ENCODE measurements at regions of chr1 and their contacts with region 1.

Region 1: GRCh38 chr1:32773018-32773763 is 44.0 kb downstream of the YARS1 start:
- DNase-seq: peak; percentile 63 to 97 (median 81)

Region 2: GRCh38 chr1:32400876-32401631 is 372.1 kb before region 1 on chr1:
- intact Hi-C with region 1: loop called (anchors 5 kb)
- DNase-seq: peak; percentile 73 to 98 (median 86)

Region 3: GRCh38 chr1:32521165-32521564 is 252.0 kb before region 1 on chr1:
- intact Hi-C with region 1: loop called (anchors 2 kb)
- DNase-seq: no peak

Region 4: DNA sequence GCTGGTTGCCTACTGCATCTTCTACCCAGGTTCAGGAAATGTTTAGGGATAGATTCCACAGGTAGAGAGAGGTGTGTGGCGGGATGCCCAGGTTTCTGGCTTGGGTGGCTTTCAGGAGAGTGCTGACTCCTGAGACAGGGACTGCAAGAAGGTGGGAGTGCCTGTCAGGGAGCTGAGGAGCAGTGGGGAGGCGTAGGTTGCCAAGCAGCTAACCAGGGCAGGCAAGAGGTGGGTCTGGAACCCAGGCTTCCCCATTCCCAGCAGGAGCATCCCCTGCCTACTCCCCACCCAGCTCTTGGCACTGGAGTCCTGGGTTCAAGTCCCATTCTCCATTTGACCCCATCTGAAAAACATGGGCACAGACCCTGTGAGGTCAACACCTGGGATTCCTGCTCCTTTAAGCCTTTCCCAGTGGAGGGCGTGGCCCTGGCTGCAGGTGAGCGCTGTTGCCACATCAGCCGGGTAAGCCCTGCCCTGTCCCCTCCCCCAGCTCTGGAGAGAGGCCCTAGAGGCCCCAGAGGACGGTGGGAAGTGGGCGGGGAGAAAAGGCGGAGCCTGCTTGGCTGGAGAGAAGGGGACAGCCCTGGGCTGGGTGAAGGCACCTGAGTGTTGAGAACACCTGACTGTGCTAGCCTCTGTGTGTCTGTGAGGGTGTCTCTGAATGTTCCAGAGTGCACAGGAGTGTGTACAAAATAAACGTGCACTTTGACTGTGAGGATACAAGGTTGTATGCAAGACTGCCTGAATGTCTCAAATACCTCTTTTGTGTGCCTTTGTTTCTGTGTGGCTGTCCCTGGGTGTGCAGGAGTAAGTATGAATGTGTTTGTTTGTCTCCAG is 56.7 kb before region 1 on chr1:
- intact Hi-C with region 1: loop called (anchors 1 kb)
- DNase-seq: peak in 1 of 10 donors; percentile 80